ENCODE measurements at regions of chr1 and their contacts with region 1.

Region 1: DNA sequence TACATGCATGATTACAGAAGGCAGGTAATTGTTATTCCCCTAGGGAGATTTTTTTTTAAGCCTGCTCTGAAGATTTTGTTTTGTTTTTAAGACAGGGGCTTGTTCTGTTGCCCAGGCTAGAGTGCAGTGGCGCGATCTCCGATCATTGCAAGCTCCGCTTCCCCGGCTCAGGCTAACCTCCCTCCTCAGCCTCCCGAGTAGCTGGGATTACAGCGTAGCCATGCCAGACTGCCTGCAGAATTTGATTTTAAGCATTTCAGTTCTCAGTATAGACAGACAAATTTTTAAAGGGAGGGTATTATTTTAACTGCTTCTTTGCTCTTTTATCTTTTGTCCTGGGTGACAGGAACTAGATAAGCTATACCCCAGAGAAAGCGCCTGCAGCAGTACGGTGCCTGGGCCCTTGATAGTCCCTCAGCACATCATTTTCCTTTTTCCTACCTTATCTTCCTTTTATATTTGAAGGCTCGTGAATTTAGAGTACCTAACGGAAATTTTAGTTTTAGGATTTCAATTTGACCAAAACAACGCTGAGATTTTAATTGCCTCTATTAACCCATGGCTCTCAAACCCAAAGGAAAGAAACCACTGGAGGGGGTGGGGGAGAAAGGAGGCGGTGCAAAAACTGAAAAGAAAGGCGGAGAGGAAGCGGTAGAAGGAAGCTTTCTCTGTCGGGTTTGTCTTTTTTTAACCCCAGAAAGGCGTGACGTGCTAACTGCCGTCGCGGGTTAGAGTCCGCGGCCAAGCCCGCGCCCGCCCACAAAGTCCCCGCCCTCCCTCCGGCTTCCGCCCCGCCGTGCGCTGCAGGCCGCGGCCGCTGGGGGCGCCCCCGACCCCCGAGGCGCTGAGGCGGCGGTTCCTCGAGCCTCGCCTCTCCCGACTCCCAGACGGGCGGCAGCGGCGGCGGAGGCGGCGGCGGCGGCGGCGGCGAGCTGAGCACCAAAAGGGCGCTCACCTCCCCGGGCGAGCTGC is at the start of gene EEIG2:
- DNase-seq: peak; percentile 58
- ATAC-seq: peak; percentile 72
- H3K4me3 ChIP-seq: peak within 1 kb of the TSS; percentile 84
- H3K27ac ChIP-seq: peak within 1 kb of the TSS; percentile 75
- H3K4me1 ChIP-seq: peaks cover 29% of the 10 kb centered on the region
- H3K27me3 ChIP-seq: no peaks in the 10 kb centered on the region
- CTCF ChIP-seq: peak; percentile 66 to 82 (median 71); a peak in 5 of 6 replicates
- EP300 ChIP-seq: peak in 1 of 2 experiments; percentile 47; a peak in 1 of 4 replicates
- POLR2A ChIP-seq: peak; percentile 43; the same call in 1 of the 2 replicates
- RAD21 ChIP-seq: peak; percentile 35; the same call in 1 of the 2 replicates
- polyA plus RNA-seq, gene EEIG2: 3.5 to 4.9 TPM

Region 2: GRCh38 chr1:108199781-108200570 is 359.5 kb before region 1 on chr1 and contains the start of gene SLC25A24:
- CTCF ChIA-PET with region 1: interaction called, 12 read pairs
- POLR2A ChIA-PET with region 1: interaction called, 4 read pairs
- RAD21 ChIA-PET with region 1: interaction called, 5 read pairs
- SMC1A ChIA-PET with region 1: interaction called, 3 read pairs
- in situ Hi-C with region 1: loop called (anchors 10 kb)
- intact Hi-C with region 1: no loop called
- DNase-seq: no peak
- ATAC-seq: peak; percentile 97
- H3K4me3 ChIP-seq: peak within 1 kb of the TSS; percentile 74
- H3K27ac ChIP-seq: no peak within 1 kb of the TSS
- H3K4me1 ChIP-seq: no peaks in the 10 kb centered on the region
- H3K27me3 ChIP-seq: peaks cover 0 to 7% of the 10 kb centered on the region in 2 experiments; a peak in 2 of 4 replicates
- CTCF ChIP-seq: no peak
- EP300 ChIP-seq: no peak
- POLR2A ChIP-seq: peak; percentile 58
- RAD21 ChIP-seq: no peak
- polyA plus RNA-seq, gene SLC25A24: 4.0 to 6.3 TPM

Region 3: DNA sequence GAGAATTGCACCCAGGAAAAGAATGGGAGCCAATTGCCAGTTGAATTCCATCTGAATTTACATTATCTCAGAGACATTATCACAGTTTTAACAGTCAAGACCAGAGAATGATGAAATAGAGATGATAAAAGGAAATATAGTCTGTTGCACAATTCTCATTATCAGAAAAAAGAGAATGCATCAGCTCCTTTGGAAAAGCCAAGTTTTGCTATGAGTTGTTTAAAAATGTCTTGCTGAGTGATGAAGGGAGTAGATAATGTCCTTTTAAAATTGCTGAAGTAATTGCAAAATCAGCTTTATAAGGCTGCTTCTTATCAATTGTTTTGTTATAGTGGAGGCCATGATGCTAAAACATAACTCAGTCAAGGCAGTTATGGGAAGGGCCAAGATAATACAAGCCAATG is 37.5 kb before region 1 on chr1:
- CTCF ChIA-PET with region 1: interaction called, 258 read pairs
- POLR2A ChIA-PET with region 1: interaction called, 3 read pairs
- RAD21 ChIA-PET with region 1: interaction called, 14 read pairs
- SMC1A ChIA-PET with region 1: interaction called, 161 read pairs
- in situ Hi-C with region 1: no loop called
- intact Hi-C with region 1: no loop called
- DNase-seq: no peak
- ATAC-seq: no peak
- H3K4me3 ChIP-seq: no peak overlapping the region
- H3K27ac ChIP-seq: no peak overlapping the region
- H3K4me1 ChIP-seq: no peaks in the 10 kb centered on the region
- H3K27me3 ChIP-seq: no peaks in the 10 kb centered on the region; a peak in 1 of 4 replicates
- CTCF ChIP-seq: no peak
- EP300 ChIP-seq: no peak
- POLR2A ChIP-seq: no peak
- RAD21 ChIP-seq: no peak

Region 4: GRCh38 chr1:108570128-108570527 is 10.6 kb after region 1 on chr1:
- CTCF ChIA-PET with region 1: interaction called, 38 read pairs
- POLR2A ChIA-PET with region 1: interaction called, 4 read pairs
- RAD21 ChIA-PET with region 1: interaction called, 10 read pairs
- SMC1A ChIA-PET with region 1: interaction called, 6 read pairs
- in situ Hi-C with region 1: no loop called
- intact Hi-C with region 1: no loop called
- DNase-seq: no peak
- ATAC-seq: peak; percentile 99
- H3K4me3 ChIP-seq: no peak overlapping the region
- H3K27ac ChIP-seq: no peak overlapping the region
- H3K4me1 ChIP-seq: peaks cover 3% of the 10 kb centered on the region; the same call in 1 of the 2 replicates
- H3K27me3 ChIP-seq: no peaks in the 10 kb centered on the region
- CTCF ChIP-seq: peak; percentile 68 to 73 (median 68)
- EP300 ChIP-seq: no peak
- POLR2A ChIP-seq: no peak
- RAD21 ChIP-seq: peak; percentile 63

Region 5: GRCh38 chr1:108643492-108644335 is 84.2 kb after region 1 on chr1:
- CTCF ChIA-PET with region 1: interaction called, 56 read pairs
- POLR2A ChIA-PET with region 1: interaction called, 4 read pairs
- RAD21 ChIA-PET with region 1: interaction called, 31 read pairs
- SMC1A ChIA-PET with region 1: interaction called, 34 read pairs
- in situ Hi-C with region 1: no loop called
- intact Hi-C with region 1: loop called (anchors 2 kb)
- DNase-seq: peak; percentile 16
- ATAC-seq: peak; percentile 86
- H3K4me3 ChIP-seq: no peak overlapping the region
- H3K27ac ChIP-seq: no peak overlapping the region
- H3K4me1 ChIP-seq: peaks cover 3% of the 10 kb centered on the region; the same call in 1 of the 2 replicates
- H3K27me3 ChIP-seq: no peaks in the 10 kb centered on the region
- CTCF ChIP-seq: peak; percentile 36 to 69 (median 47); a peak in 5 of 6 replicates
- EP300 ChIP-seq: no peak
- POLR2A ChIP-seq: no peak
- RAD21 ChIP-seq: peak; percentile 71

Region 6: DNA sequence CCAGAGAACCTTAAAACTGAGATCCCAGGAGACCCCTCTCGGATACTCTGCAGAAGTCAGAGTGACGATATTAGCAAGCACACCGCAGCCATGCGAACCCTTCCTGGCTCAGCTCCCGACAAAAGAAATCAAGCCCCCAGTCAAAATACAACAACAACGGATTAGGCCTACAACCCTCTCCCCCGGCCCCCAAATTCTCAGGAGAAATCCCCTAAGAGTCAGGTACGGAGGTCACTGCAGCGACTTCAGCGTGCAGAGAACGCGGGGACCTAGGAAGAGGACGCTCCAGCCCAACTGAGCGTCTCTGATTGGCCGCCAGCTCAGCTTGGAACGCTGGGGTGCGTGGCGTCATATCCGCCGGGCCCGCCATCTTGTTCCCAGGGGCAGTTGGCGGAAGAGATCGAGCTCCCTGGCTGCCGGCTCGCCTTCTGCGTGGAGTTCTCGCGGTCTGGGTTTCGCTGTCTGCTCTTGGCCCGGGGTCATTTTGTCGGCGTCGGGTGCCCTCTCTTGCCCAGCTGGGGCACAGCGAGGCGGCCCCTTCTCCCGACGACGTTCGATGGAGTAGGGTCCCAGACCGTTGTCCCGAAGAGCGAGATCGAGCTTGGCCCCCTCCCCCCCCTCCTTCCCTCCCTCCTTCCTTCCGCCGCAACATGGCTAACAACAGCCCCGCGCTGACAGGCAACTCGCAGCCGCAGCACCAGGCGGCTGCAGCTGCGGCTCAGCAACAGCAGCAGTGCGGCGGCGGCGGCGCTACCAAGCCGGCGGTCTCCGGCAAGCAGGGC is 132.6 kb after region 1 on chr1 and contains the start of gene PRPF38B:
- CTCF ChIA-PET with region 1: interaction called, 10 read pairs
- POLR2A ChIA-PET with region 1: interaction called, 9 read pairs
- RAD21 ChIA-PET with region 1: interaction called, 12 read pairs
- SMC1A ChIA-PET with region 1: interaction called, 13 read pairs
- in situ Hi-C with region 1: no loop called
- intact Hi-C with region 1: loop called (anchors 2 kb)
- DNase-seq: peak; percentile 66
- ATAC-seq: peak; percentile 93
- H3K4me3 ChIP-seq: peak within 1 kb of the TSS; percentile 96
- H3K27ac ChIP-seq: peak within 1 kb of the TSS; percentile 88
- H3K4me1 ChIP-seq: no peaks in the 10 kb centered on the region
- H3K27me3 ChIP-seq: no peaks in the 10 kb centered on the region
- CTCF ChIP-seq: no peak
- EP300 ChIP-seq: no peak
- POLR2A ChIP-seq: peak; percentile 99
- RAD21 ChIP-seq: no peak
- polyA plus RNA-seq, gene PRPF38B: 32.9 to 37.9 TPM

Region 7: GRCh38 chr1:109041621-109042468 is 482.3 kb after region 1 on chr1 and contains the start of gene WDR47:
- CTCF ChIA-PET with region 1: no interaction called
- POLR2A ChIA-PET with region 1: no interaction called
- RAD21 ChIA-PET with region 1: no interaction called
- SMC1A ChIA-PET with region 1: no interaction called
- in situ Hi-C with region 1: no loop called
- intact Hi-C with region 1: no loop called
- DNase-seq: peak; percentile 72
- ATAC-seq: peak; percentile 98
- H3K4me3 ChIP-seq: peak within 1 kb of the TSS; percentile 100
- H3K27ac ChIP-seq: peak within 1 kb of the TSS; percentile 29
- H3K4me1 ChIP-seq: no peaks in the 10 kb centered on the region
- H3K27me3 ChIP-seq: no peaks in the 10 kb centered on the region
- CTCF ChIP-seq: no peak
- EP300 ChIP-seq: no peak
- POLR2A ChIP-seq: peak; percentile 100
- RAD21 ChIP-seq: no peak
- polyA plus RNA-seq, gene WDR47: 2.4 TPM

Measured in GM12878 (cell line).